Heart left ventricle (tissue), 16 donors: ENCODE measurements at regions of chr2 and their contacts with region 1.

Region 1: GRCh38 chr2:88669371-88670214 is 21.9 kb upstream of the RPIA start:
- DNase-seq: peak in 1 of 5 donors; percentile 18
- ATAC-seq: peak in 3 of 4 donors; percentile 74
- H3K4me3 ChIP-seq: no peak overlapping the region
- H3K27ac ChIP-seq: no peak overlapping the region
- H3K4me1 ChIP-seq: peaks cover 0 to 7% (median 0%) of the 10 kb centered on the region in 12 donors
- H3K27me3 ChIP-seq: no peaks in the 10 kb centered on the region
- CTCF ChIP-seq: peak; percentile 44 to 72 (median 60)
- POLR2A ChIP-seq: no peak

Region 2: GRCh38 chr2:88190808-88191721 is 478.5 kb before region 1 on chr2:
- intact Hi-C with region 1: loop called in 1 of 10 experiments (anchors 10 kb)
- DNase-seq: no peak
- ATAC-seq: peak in 3 of 4 donors; percentile 37 to 53 (median 40)
- H3K4me3 ChIP-seq: no peak overlapping the region
- H3K27ac ChIP-seq: no peak overlapping the region
- H3K4me1 ChIP-seq: peaks cover 0 to 8% (median 0%) of the 10 kb centered on the region in 12 donors
- H3K27me3 ChIP-seq: peaks cover 0 to 3% (median 0%) of the 10 kb centered on the region in 9 donors
- CTCF ChIP-seq: peak; percentile 43 to 71 (median 58)
- POLR2A ChIP-seq: no peak

Region 3: GRCh38 chr2:88590998-88591613 is 78.5 kb before region 1 on chr2:
- intact Hi-C with region 1: loop called (anchors 1 to 2 kb)
- DNase-seq: peak in 2 of 5 donors; percentile 39 to 46
- ATAC-seq: peak; percentile 64 to 87 (median 86)
- H3K4me3 ChIP-seq: no peak overlapping the region
- H3K27ac ChIP-seq: peak overlapping the region in 2 of 12 donors; percentile 14 to 24
- H3K4me1 ChIP-seq: peaks cover 0 to 8% (median 0%) of the 10 kb centered on the region in 12 donors
- H3K27me3 ChIP-seq: no peaks in the 10 kb centered on the region
- CTCF ChIP-seq: peak; percentile 69 to 88 (median 85)
- POLR2A ChIP-seq: no peak

Region 4: GRCh38 chr2:88632569-88632968 is 37.0 kb before region 1 on chr2:
- intact Hi-C with region 1: loop called in 4 of 10 experiments (anchors 5 kb)
- DNase-seq: no peak
- ATAC-seq: no peak
- H3K4me3 ChIP-seq: no peak overlapping the region
- H3K27ac ChIP-seq: no peak overlapping the region
- H3K4me1 ChIP-seq: peaks cover 0 to 12% (median 7%) of the 10 kb centered on the region in 12 donors
- H3K27me3 ChIP-seq: no peaks in the 10 kb centered on the region
- CTCF ChIP-seq: no peak
- POLR2A ChIP-seq: no peak

Region 5: DNA sequence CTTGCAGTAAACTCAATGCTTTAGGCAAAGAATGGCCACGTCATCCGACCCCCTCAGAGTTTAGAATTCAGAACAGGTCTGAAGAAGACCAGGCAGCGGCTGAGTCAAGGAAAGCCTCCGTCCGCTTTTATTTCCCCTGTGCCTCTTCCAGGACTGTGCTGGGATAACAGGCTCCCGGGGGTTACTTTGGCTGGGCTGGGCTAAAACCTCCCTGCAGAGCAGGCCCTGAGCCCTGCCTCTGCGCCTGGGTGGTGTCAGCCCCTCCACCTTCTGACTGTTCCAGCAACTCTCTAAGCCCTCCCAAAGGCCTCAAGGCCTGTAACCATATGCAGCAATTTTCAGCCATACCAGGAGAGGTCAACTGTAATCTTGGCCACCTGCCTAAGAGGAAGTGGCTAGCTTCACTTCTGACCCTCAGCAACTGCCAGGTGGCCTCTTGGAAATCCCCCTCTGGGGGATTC is 188.4 kb after region 1 on chr2:
- intact Hi-C with region 1: no loop called
- DNase-seq: peak in 3 of 5 donors; percentile 19 to 29 (median 28)
- ATAC-seq: peak in 3 of 4 donors; percentile 16 to 73 (median 29)
- H3K4me3 ChIP-seq: no peak overlapping the region
- H3K27ac ChIP-seq: peak overlapping the region in 2 of 12 donors; percentile 19 to 33
- H3K4me1 ChIP-seq: peaks cover 0 to 12% (median 6%) of the 10 kb centered on the region in 12 donors
- H3K27me3 ChIP-seq: no peaks in the 10 kb centered on the region
- CTCF ChIP-seq: no peak
- POLR2A ChIP-seq: no peak